OCI-LY7 (cell line): ENCODE measurements at regions of chr1 and their contacts with region 1.

Region 1: DNA sequence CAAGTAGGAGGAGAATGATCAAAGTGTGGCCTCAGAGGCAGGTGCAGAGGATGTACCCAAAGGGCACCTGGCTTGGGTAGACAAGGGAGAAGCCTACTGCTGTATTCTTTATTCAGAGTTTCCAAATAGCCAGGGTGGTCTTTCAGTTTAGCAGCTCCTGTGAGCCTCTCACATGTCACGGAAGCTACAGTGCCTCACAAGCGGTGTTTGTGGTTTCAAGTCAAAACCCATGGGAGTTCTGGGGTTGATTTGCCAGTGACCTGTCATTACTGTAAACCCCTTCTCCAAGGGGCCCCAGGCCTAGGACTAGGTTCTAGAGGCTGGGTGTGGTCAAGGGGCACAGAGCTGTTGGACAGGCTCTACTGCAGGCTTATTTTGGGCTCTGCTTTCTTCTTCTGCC is 10.2 kb upstream of the IL10 start:
- DNase-seq: peak; percentile 92
- H3K4me3 ChIP-seq: peak overlapping the region; percentile 30
- H3K27ac ChIP-seq: peak overlapping the region; percentile 64
- H3K4me1 ChIP-seq: peaks cover 53% of the 10 kb centered on the region
- CTCF ChIP-seq: no peak

Region 2: GRCh38 chr1:206583707-206584648 is 198.5 kb before region 1 on chr1:
- CTCF ChIA-PET with region 1: no interaction called
- POLR2A ChIA-PET with region 1: no interaction called
- intact Hi-C with region 1: no loop called
- DNase-seq: peak; percentile 78
- H3K4me3 ChIP-seq: no peak overlapping the region
- H3K27ac ChIP-seq: no peak overlapping the region
- H3K4me1 ChIP-seq: peaks cover 14% of the 10 kb centered on the region
- CTCF ChIP-seq: peak; percentile 99

Region 3: DNA sequence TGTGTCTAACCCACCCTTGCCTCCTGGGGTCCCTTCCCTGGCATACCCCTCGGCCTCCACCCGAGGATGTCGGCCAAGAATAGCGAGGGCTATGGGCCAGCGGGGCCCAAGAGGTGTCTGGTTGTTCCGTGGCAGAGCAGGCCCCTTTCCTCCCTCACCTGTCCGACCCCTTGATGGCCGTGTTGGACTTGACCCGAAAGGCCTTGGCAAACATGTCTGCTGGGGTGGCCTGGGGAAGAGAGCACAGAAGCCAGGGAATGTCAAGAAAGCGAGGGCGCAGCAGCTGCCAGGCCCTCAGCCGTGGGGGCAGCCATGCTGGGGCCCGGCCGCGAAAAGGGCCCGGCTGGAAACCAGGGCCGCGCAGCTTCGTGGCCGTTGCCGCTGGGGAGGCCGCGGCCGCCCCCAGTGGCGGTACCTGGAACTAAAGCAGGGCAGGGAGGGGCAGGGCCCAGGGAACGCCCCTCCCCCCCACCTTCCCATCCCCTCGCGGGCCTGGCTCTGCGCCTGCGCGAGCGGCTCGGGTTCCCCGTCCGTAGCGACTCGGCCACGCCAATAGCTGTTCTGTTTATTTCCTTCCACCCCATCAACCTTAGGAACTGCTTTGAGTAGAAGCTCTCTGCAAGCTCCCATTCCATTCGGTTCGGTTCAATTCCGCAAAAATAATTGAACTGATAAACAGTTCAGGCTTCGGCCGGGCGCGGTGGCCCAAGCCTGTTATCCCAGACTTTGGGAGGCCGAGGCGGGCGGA is 170.1 kb before region 1 on chr1 and contains the start of gene EIF2D:
- CTCF ChIA-PET with region 1: no interaction called
- POLR2A ChIA-PET with region 1: no interaction called
- intact Hi-C with region 1: no loop called
- DNase-seq: peak; percentile 96
- H3K4me3 ChIP-seq: peak within 1 kb of the TSS; percentile 72
- H3K27ac ChIP-seq: peak within 1 kb of the TSS; percentile 27
- H3K4me1 ChIP-seq: peaks cover 13% of the 10 kb centered on the region
- CTCF ChIP-seq: peak; percentile 82
- total RNA-seq, gene EIF2D: 85.4 and 89.3 TPM in 2 replicates

Region 4: DNA sequence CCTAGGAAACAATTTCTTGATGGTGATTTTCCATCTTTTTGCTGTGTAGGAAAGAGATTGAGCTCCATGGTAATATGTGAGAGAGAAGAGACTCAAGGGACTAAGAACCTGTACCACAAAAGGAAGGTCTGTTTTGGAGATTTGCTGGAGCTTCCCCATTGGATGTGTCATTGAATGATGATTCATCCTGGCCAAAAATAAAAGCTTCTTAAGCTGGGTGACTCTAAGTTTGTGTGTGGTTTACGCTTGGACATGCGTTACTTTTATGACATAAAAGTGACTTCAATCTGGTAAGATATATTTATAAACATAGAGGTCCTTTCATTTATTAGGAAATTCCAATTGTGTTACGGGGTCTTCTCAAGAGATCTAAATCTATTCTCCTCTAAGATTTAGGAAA is 29.3 kb before region 1 on chr1:
- CTCF ChIA-PET with region 1: no interaction called
- POLR2A ChIA-PET with region 1: no interaction called
- intact Hi-C with region 1: no loop called
- DNase-seq: no peak
- H3K4me3 ChIP-seq: no peak overlapping the region
- H3K27ac ChIP-seq: no peak overlapping the region
- H3K4me1 ChIP-seq: peaks cover 9% of the 10 kb centered on the region
- CTCF ChIP-seq: no peak

Region 5: GRCh38 chr1:206770531-206771337 is 11.7 kb before region 1 on chr1 and contains the start of gene IL19:
- CTCF ChIA-PET with region 1: no interaction called
- POLR2A ChIA-PET with region 1: interaction called, 15 read pairs
- intact Hi-C with region 1: no loop called
- DNase-seq: no peak
- H3K4me3 ChIP-seq: no peak within 1 kb of the TSS
- H3K27ac ChIP-seq: no peak within 1 kb of the TSS
- H3K4me1 ChIP-seq: peaks cover 29% of the 10 kb centered on the region
- CTCF ChIP-seq: no peak
- total RNA-seq, gene IL19: not detected in 2 replicates